Activated CD4-positive, alpha-beta memory T cell treated with anti-CD3 and anti-CD28 coated beads for 36 hours (primary cell): ENCODE measurements at regions of chr1 and their contacts with region 1.

Region 1: GRCh38 chr1:23122023-23122748 is 46.5 kb downstream of the LUZP1 start:
- DNase-seq: no peak
- H3K4me3 Mint-ChIP-seq: no peak overlapping the region
- H3K27ac Mint-ChIP-seq: peak overlapping the region; percentile 18
- H3K4me1 Mint-ChIP-seq: peaks cover 67% of the 10 kb centered on the region
- H3K27me3 Mint-ChIP-seq: no peaks in the 10 kb centered on the region

Region 2: DNA sequence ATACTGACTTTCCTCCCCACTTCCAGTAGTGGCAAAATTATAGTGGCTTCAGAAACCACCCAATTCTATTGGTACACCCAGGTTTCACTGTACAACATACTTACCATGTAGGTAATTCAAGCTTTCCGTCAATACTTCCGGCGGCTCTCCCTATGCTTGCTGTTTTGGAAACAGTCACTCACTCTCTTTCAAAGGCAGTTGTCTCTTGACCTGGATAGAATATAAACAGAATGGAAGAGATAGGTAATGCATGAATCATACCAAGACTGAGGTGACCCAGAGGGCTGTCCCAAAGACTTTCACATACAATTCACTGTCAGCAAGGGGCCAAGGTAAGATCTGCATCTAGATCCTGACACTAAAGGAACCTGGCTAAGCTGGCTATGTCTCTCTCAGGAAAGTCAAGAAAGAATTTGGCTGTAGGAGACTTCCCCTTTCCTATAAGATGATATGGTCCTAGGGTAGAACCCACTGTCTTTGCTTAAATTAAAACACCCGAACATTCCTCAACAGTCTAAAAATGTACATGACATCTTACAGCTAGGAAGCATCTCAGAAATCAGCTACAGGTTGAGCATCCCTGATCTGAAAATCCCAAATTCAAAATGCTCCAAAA is 13.2 kb before region 1 on chr1:
- CTCF ChIA-PET with region 1: no interaction called
- POLR2A ChIA-PET with region 1: interaction called, 11 read pairs
- intact Hi-C with region 1: loop called (anchors 2 kb)
- DNase-seq: peak; percentile 66
- H3K4me3 Mint-ChIP-seq: no peak overlapping the region
- H3K27ac Mint-ChIP-seq: peak overlapping the region; percentile 77
- H3K4me1 Mint-ChIP-seq: peaks cover 67% of the 10 kb centered on the region
- H3K27me3 Mint-ChIP-seq: no peaks in the 10 kb centered on the region

Region 3: GRCh38 chr1:23168457-23169194 is 46.4 kb after region 1 on chr1 and contains the start of gene LUZP1:
- CTCF ChIA-PET with region 1: interaction called, 4 read pairs
- POLR2A ChIA-PET with region 1: interaction called, 14 read pairs
- intact Hi-C with region 1: no loop called
- DNase-seq: peak; percentile 91
- H3K4me3 Mint-ChIP-seq: peak within 1 kb of the TSS; percentile 96
- H3K27ac Mint-ChIP-seq: peak within 1 kb of the TSS; percentile 85
- H3K4me1 Mint-ChIP-seq: peaks cover 26% of the 10 kb centered on the region
- H3K27me3 Mint-ChIP-seq: no peaks in the 10 kb centered on the region
- total RNA-seq, gene LUZP1: 19.0 to 21.2 TPM